Right lobe of liver (tissue), 6 donors: ENCODE measurements at regions of chr2 and their contacts with region 1.

Region 1: GRCh38 chr2:55718165-55719008 is 24.7 kb upstream of the PNPT1 start:
- DNase-seq: no peak
- ATAC-seq: peak; percentile 62 to 80 (median 70)
- H3K4me3 ChIP-seq: no peak overlapping the region
- H3K27ac ChIP-seq: no peak overlapping the region
- H3K4me1 ChIP-seq: no peaks in the 10 kb centered on the region
- H3K27me3 ChIP-seq: no peaks in the 10 kb centered on the region
- CTCF ChIP-seq: peak; percentile 78 to 81 (median 79)
- POLR2A ChIP-seq: no peak

Region 2: GRCh38 chr2:55875434-55876135 is 157.2 kb after region 1 on chr2:
- intact Hi-C with region 1: no loop called
- DNase-seq: no peak
- ATAC-seq: peak; percentile 74 to 90 (median 84)
- H3K4me3 ChIP-seq: no peak overlapping the region
- H3K27ac ChIP-seq: peak overlapping the region in 1 of 3 donors; percentile 69
- H3K4me1 ChIP-seq: peaks cover 0 to 33% (median 0%) of the 10 kb centered on the region in 4 donors
- H3K27me3 ChIP-seq: no peaks in the 10 kb centered on the region
- CTCF ChIP-seq: no peak
- POLR2A ChIP-seq: no peak

Region 3: GRCh38 chr2:56118474-56118873 is 400.1 kb after region 1 on chr2:
- intact Hi-C with region 1: loop called in 1 of 2 experiments (anchors 10 kb)
- DNase-seq: no peak
- ATAC-seq: no peak
- H3K4me3 ChIP-seq: no peak overlapping the region
- H3K27ac ChIP-seq: no peak overlapping the region
- H3K4me1 ChIP-seq: no peaks in the 10 kb centered on the region
- H3K27me3 ChIP-seq: no peaks in the 10 kb centered on the region
- CTCF ChIP-seq: no peak
- POLR2A ChIP-seq: no peak

Region 4: GRCh38 chr2:56132138-56132537 is 413.8 kb after region 1 on chr2:
- intact Hi-C with region 1: loop called in 1 of 2 experiments (anchors 10 kb)
- DNase-seq: no peak
- ATAC-seq: peak; percentile 58 to 76 (median 67)
- H3K4me3 ChIP-seq: no peak overlapping the region
- H3K27ac ChIP-seq: no peak overlapping the region
- H3K4me1 ChIP-seq: no peaks in the 10 kb centered on the region
- H3K27me3 ChIP-seq: no peaks in the 10 kb centered on the region
- CTCF ChIP-seq: peak; percentile 49 to 56 (median 52)
- POLR2A ChIP-seq: no peak